ENCODE measurements at regions of chr20 and their contacts with region 1.

Region 1: DNA sequence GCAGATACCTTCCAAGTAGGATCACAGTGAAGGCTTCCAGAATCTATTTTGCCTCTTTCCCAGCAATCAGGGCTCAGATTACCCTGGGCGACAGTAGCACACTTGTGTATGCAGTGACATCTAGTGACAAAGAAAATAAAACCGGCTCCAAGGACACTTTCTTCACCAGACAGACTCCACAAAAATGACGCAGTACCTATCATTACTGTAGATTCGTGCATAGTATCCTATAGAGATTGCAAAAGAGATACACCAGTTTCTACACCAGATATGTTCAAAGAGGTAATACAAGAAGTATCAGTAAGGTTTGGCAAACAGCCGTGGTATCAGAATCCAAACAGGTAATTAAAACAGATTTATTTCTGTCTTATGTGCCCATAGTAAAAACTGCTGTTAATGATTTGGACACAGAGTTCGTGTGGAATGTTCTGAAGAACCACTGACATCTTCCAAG is 600.4 kb upstream of the JAG1 start:
- DNase-seq: no peak
- H3K4me3 ChIP-seq: no peak overlapping the region
- CTCF ChIP-seq: no peak
- POLR2A ChIP-seq: no peak

Region 2: DNA sequence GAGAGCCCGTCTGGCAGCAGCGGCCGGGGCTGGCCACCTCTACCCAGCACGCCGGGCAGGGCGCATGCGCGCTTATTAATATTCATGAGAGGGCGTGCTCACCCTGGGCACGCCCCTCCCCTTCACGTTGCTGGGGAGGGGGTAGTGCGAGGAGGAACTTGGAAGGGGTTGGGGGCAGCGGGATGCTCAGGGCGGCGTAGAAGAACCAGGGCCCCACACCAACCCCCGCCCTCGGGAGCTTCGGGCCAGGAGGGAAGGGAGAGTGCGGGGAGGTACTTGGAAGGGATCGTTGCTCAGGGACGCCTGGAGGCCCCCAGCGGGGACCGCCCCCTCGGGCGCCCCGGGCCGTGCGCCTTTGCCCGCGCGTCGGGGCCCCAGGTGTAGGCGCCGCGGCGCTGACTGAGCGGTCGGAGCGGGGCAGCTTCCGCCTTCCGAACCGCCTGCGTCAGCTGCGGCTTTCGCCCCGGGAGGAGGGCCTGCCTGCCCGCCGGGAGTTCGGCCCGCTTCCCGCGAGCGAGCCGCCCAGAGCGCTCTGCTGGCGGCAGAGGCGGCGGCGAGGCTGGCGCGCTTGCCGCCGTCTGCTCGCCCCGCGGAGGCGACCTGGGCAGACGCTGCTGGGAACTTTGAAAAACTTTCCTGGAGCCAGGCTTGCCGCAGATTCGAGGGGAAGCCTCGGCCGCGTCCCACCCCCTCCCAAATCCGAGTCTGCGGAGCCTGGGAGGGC is 600.0 kb before region 1 on chr20 and contains the start of gene JAG1:
- intact Hi-C with region 1: loop called (anchors 10 kb)
- DNase-seq: peak; percentile 94 to 98
- H3K4me3 ChIP-seq: peak within 1 kb of the TSS; percentile 78
- CTCF ChIP-seq: no peak
- POLR2A ChIP-seq: peak in 1 of 2 donors; percentile 27
- total RNA-seq, gene JAG1: 145 to 238 (median 186) TPM